B cell (primary cell): ENCODE measurements at regions of chr17 and their contacts with region 1.

Region 1: DNA sequence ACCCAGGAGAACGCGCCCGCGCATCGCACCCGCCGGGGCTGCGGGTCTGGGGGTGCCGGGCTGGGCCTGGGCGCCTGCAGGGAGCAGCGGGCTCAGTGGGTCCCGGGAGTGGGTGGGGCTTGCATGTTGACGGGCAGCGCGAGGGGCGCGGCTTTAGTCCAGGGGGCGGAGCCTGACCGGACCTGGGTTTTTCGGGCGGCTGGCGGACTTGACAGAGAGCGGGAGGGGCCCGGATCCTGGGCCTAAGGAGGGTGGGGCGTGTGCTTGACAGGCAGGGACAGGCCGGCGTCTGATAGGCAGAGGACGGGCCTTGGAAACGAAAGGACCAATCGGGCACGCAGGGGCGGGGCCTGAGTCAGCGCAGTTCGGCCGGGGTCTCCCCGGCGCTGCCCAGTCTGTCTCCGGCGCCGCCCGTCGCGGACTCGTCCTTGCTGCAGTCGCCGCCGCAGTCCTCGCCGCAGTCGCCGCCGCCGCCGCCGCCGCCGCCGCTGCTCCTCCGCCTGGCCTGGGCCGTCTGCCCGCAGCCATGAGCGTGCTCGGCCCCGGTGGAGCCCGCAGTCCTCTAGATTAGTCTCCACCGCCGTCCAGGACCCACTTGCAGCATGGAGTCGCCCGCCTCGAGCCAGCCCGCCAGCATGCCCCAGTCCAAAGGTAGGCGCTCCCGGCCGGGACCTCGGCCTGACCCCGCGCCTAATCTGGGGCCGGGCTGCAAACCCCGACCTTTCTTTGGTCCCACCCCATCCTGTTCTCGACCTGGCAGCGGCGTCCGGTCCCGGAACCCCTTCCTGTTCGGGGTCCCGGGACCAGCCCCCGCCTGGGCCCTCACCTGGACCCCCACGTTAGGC is at the start of gene MAP2K3:
- DNase-seq: peak; percentile 98
- ATAC-seq: peak; percentile 66
- H3K4me3 ChIP-seq: peak within 1 kb of the TSS; percentile 81 to 98 (median 93)
- H3K4me3 Mint-ChIP-seq: peak within 1 kb of the TSS; percentile 96
- H3K27ac ChIP-seq: peak within 1 kb of the TSS; percentile 95
- H3K27ac Mint-ChIP-seq: peak within 1 kb of the TSS; percentile 99
- H3K4me1 ChIP-seq: peaks cover 58 to 78% of the 10 kb centered on the region in 2 donors
- H3K4me1 Mint-ChIP-seq: peaks cover 78% of the 10 kb centered on the region
- H3K27me3 ChIP-seq: no peaks in the 10 kb centered on the region
- H3K27me3 Mint-ChIP-seq: no peaks in the 10 kb centered on the region
- CTCF ChIP-seq: no peak
- total RNA-seq, gene MAP2K3: 114 and 118 TPM in 2 replicates

Region 2: GRCh38 chr17:20300436-20300934 is 984.1 kb before region 1 on chr17:
- CTCF ChIA-PET with region 1: no interaction called
- POLR2A ChIA-PET with region 1: no interaction called
- intact Hi-C with region 1: no loop called
- DNase-seq: no peak
- ATAC-seq: no peak
- H3K4me3 ChIP-seq: no peak overlapping the region
- H3K4me3 Mint-ChIP-seq: no peak overlapping the region
- H3K27ac ChIP-seq: no peak overlapping the region
- H3K27ac Mint-ChIP-seq: no peak overlapping the region
- H3K4me1 ChIP-seq: no peaks in the 10 kb centered on the region
- H3K4me1 Mint-ChIP-seq: no peaks in the 10 kb centered on the region
- H3K27me3 ChIP-seq: no peaks in the 10 kb centered on the region
- H3K27me3 Mint-ChIP-seq: no peaks in the 10 kb centered on the region
- CTCF ChIP-seq: no peak

Region 3: DNA sequence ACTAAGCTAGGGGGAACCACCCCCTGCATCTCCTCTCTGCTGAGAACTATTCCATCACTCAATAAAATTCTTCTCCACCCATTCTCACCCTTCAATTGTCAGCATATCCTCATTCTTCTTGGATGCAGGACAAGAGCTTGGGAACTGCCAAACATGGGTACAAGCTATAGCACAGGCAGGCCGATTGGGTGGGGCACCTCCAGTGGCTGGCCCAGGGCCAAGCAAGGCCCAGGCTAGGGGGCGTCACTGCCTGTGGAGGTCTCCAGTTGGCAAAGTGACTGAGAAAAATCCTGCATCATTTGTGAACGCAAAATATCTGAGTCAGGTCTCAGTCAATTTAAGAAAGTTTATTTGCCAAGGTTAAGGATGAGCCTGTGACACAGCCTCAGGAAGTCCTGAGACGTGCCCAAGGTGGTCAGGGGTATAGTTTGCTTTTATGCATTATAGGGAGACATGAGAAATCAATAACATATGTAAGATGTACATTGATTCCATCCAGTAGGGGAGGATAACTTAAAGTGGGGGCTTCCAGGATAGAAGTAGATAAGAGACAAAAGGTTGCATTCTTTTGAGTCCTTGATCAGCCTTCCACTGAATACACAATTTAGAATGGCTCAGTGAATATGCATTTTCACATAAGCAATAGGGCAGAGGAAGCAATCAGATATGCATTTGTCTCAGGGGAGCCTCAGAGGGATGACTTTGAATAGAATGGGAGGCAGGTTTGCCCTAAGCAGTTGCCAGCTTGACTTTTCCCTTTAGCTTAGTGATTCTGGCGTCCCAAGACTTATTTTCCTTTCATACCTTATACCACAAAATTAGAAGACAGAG is 179.3 kb before region 1 on chr17:
- CTCF ChIA-PET with region 1: no interaction called
- POLR2A ChIA-PET with region 1: no interaction called
- intact Hi-C with region 1: no loop called
- DNase-seq: no peak
- ATAC-seq: no peak
- H3K4me3 ChIP-seq: no peak overlapping the region
- H3K4me3 Mint-ChIP-seq: no peak overlapping the region
- H3K27ac ChIP-seq: no peak overlapping the region
- H3K27ac Mint-ChIP-seq: no peak overlapping the region
- H3K4me1 ChIP-seq: peaks cover 0 to under 1% of the 10 kb centered on the region in 2 donors
- H3K4me1 Mint-ChIP-seq: no peaks in the 10 kb centered on the region
- H3K27me3 ChIP-seq: no peaks in the 10 kb centered on the region
- H3K27me3 Mint-ChIP-seq: peaks cover 4% of the 10 kb centered on the region
- CTCF ChIP-seq: no peak

Region 4: GRCh38 chr17:21252796-21253645 is 31.5 kb before region 1 on chr17 and contains the start of gene NATD1:
- CTCF ChIA-PET with region 1: interaction called, 5 read pairs
- POLR2A ChIA-PET with region 1: interaction called, 9 read pairs
- intact Hi-C with region 1: loop called (anchors 1 kb)
- DNase-seq: peak; percentile 90
- ATAC-seq: peak; percentile 79
- H3K4me3 ChIP-seq: peak within 1 kb of the TSS; percentile 35 to 90 (median 61)
- H3K4me3 Mint-ChIP-seq: peak within 1 kb of the TSS; percentile 89
- H3K27ac ChIP-seq: peak within 1 kb of the TSS; percentile 5 to 70
- H3K27ac Mint-ChIP-seq: peak within 1 kb of the TSS; percentile 88
- H3K4me1 ChIP-seq: peaks cover 11 to 24% of the 10 kb centered on the region in 2 donors
- H3K4me1 Mint-ChIP-seq: peaks cover 22% of the 10 kb centered on the region
- H3K27me3 ChIP-seq: no peaks in the 10 kb centered on the region
- H3K27me3 Mint-ChIP-seq: peaks cover 5% of the 10 kb centered on the region
- CTCF ChIP-seq: no peak
- total RNA-seq, gene NATD1: 6.2 and 6.7 TPM in 2 replicates

Region 5: GRCh38 chr17:21313320-21313719 is 28.8 kb after region 1 on chr17:
- CTCF ChIA-PET with region 1: interaction called, 8 read pairs
- POLR2A ChIA-PET with region 1: interaction called, 6 read pairs
- intact Hi-C with region 1: loop called (anchors 2 kb)
- DNase-seq: no peak
- ATAC-seq: no peak
- H3K4me3 ChIP-seq: no peak overlapping the region
- H3K4me3 Mint-ChIP-seq: no peak overlapping the region
- H3K27ac ChIP-seq: no peak overlapping the region
- H3K27ac Mint-ChIP-seq: peak overlapping the region; percentile 41
- H3K4me1 ChIP-seq: peaks cover 5 to 14% of the 10 kb centered on the region in 2 donors
- H3K4me1 Mint-ChIP-seq: peaks cover 12% of the 10 kb centered on the region
- H3K27me3 ChIP-seq: no peaks in the 10 kb centered on the region
- H3K27me3 Mint-ChIP-seq: no peaks in the 10 kb centered on the region
- CTCF ChIP-seq: no peak

Region 6: GRCh38 chr17:21318439-21318838 is 33.9 kb after region 1 on chr17:
- CTCF ChIA-PET with region 1: interaction called, 7 read pairs
- POLR2A ChIA-PET with region 1: interaction called, 3 read pairs
- intact Hi-C with region 1: loop called (anchors 1 kb)
- DNase-seq: no peak
- ATAC-seq: no peak
- H3K4me3 ChIP-seq: no peak overlapping the region
- H3K4me3 Mint-ChIP-seq: no peak overlapping the region
- H3K27ac ChIP-seq: no peak overlapping the region
- H3K27ac Mint-ChIP-seq: no peak overlapping the region
- H3K4me1 ChIP-seq: peaks cover 0 to 9% of the 10 kb centered on the region in 2 donors
- H3K4me1 Mint-ChIP-seq: peaks cover 7% of the 10 kb centered on the region
- H3K27me3 ChIP-seq: peaks cover 0 to under 1% (median 0%) of the 10 kb centered on the region in 4 experiments
- H3K27me3 Mint-ChIP-seq: peaks cover 3% of the 10 kb centered on the region
- CTCF ChIP-seq: no peak

Region 7: GRCh38 chr17:21397341-21398190 is 113.0 kb after region 1 on chr17:
- CTCF ChIA-PET with region 1: no interaction called
- POLR2A ChIA-PET with region 1: no interaction called
- intact Hi-C with region 1: no loop called
- DNase-seq: no peak
- ATAC-seq: no peak
- H3K4me3 ChIP-seq: no peak overlapping the region
- H3K4me3 Mint-ChIP-seq: no peak overlapping the region
- H3K27ac ChIP-seq: no peak overlapping the region
- H3K27ac Mint-ChIP-seq: no peak overlapping the region
- H3K4me1 ChIP-seq: no peaks in the 10 kb centered on the region
- H3K4me1 Mint-ChIP-seq: no peaks in the 10 kb centered on the region
- H3K27me3 ChIP-seq: no peaks in the 10 kb centered on the region
- H3K27me3 Mint-ChIP-seq: no peaks in the 10 kb centered on the region
- CTCF ChIP-seq: no peak

Region 8: DNA sequence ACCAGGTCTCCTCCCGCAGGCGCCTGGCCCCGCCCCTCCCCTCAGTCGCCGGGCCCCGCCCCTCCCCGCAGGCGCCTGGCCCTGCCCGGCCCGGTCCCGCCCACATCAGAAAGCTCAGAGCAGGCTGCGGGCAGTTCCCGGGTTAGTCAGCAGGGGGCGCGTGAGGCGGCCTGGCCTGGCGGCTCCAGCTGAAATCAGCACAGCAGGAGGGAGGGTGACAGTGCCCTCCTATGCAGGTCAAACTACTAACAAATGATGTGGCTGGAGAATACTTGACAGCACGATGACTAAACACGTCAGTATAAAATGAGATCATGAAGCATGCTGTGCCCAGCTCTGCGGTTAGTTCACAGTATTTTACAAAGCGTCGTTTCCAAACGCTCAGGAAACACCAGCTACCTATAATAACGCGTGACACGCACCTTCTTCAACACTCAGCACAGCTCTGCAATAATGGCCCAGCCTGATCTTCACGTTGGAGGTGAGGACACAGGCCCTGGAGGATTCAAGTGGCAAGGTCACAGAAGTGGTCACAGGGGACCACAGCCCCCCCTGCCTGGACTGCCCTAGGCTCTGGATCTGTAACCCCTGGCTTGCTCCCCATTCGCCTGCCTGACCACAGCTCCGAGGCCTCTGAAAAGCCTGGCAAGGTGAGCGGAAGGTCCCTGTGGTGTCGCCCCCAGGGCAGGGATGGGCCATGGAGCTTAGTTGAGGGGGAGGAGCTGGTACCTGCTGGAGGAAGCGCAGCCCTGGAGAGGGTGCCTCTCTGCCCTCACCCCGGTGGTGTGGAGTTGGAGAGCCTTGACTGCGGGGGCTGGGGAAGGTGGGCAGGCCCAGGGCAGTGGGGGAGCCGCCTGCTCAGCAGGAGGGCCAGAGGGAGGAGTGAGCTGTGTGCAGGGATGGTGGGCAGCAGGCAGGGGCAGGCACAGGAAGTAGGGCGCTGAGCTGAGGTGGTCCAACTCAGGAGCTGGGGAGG is 172.8 kb after region 1 on chr17:
- CTCF ChIA-PET with region 1: interaction called, 6 read pairs
- POLR2A ChIA-PET with region 1: no interaction called
- intact Hi-C with region 1: loop called (anchors 2 kb)
- DNase-seq: peak; percentile 83
- ATAC-seq: peak; percentile 93
- H3K4me3 ChIP-seq: no peak overlapping the region
- H3K4me3 Mint-ChIP-seq: no peak overlapping the region
- H3K27ac ChIP-seq: no peak overlapping the region
- H3K27ac Mint-ChIP-seq: no peak overlapping the region
- H3K4me1 ChIP-seq: peaks cover 0 to 5% of the 10 kb centered on the region in 2 donors
- H3K4me1 Mint-ChIP-seq: peaks cover 11% of the 10 kb centered on the region
- H3K27me3 ChIP-seq: peaks cover 0 to 20% (median 4%) of the 10 kb centered on the region in 4 experiments
- H3K27me3 Mint-ChIP-seq: peaks cover 43% of the 10 kb centered on the region
- CTCF ChIP-seq: peak; percentile 82